ENCODE measurements at regions of chr14 and their contacts with region 1.

Region 1: DNA sequence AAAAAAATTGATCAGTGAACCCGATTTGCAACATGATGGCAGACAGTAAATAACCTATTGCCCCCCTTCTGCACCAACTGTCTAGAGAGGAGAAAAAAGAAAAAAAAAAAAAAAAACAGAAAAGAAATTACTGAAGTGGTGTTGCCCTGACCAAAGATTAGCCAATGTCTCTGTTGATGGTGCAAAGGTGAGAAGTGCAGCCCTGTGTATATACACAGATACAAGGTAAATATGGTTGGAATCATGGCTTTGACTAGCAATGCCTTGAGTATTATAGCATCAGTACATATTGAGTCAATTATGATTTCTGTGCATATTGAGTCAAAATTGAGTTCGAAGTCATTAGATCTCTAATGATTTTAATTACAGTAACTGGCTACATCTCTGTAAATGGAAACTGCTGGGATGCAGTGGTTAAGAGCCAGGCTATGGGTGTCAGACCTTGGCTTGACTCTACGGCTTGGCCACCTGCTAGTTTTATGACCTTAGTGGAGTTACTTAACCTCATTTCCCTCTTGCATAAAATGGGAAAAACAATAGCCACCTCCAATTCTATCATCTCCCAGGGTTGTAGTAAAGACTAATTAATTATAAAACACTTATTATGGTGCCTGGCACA is 51.0 kb downstream of the EGLN3 start:
- DNase-seq: no peak
- H3K4me3 Mint-ChIP-seq: no peak overlapping the region
- H3K27ac Mint-ChIP-seq: no peak overlapping the region
- H3K4me1 Mint-ChIP-seq: peaks cover 6% of the 10 kb centered on the region
- H3K27me3 Mint-ChIP-seq: peaks cover 24% of the 10 kb centered on the region

Region 2: DNA sequence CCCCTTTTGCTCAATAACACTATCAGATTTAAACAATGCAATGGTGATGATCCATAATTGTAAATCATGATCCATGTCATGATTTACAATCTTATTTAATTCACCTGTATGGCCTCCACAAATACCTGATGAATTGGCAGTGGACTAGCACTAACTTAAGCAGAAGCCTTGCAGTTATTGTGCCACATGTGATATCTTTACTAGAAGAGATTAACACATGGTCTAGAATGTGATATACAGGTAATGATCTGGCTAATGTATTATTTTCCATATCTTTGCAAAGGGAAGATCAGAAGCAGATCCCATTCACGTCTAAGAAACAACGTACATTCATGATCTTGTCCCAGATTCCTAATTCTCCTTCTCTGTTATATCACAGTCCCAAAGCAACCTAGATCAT is 14.9 kb before region 1 on chr14:
- CTCF ChIA-PET with region 1: no interaction called
- POLR2A ChIA-PET with region 1: interaction called, 10 read pairs
- DNase-seq: no peak
- H3K4me3 Mint-ChIP-seq: no peak overlapping the region
- H3K27ac Mint-ChIP-seq: no peak overlapping the region
- H3K4me1 Mint-ChIP-seq: peaks cover 1% of the 10 kb centered on the region
- H3K27me3 Mint-ChIP-seq: peaks cover 14% of the 10 kb centered on the region

Measured in activated CD4-positive, alpha-beta T cell treated with anti-CD3 and anti-CD28 coated beads, Interleukin-2, amount 10 ng/mL, durations not matched to agents 7 days and 5 days (primary cell).